Activated naive CD4-positive, alpha-beta T cell treated with anti-CD3 and anti-CD28 coated beads for 36 hours (primary cell): ENCODE measurements at regions of chr7 and their contacts with region 1.

Region 1: DNA sequence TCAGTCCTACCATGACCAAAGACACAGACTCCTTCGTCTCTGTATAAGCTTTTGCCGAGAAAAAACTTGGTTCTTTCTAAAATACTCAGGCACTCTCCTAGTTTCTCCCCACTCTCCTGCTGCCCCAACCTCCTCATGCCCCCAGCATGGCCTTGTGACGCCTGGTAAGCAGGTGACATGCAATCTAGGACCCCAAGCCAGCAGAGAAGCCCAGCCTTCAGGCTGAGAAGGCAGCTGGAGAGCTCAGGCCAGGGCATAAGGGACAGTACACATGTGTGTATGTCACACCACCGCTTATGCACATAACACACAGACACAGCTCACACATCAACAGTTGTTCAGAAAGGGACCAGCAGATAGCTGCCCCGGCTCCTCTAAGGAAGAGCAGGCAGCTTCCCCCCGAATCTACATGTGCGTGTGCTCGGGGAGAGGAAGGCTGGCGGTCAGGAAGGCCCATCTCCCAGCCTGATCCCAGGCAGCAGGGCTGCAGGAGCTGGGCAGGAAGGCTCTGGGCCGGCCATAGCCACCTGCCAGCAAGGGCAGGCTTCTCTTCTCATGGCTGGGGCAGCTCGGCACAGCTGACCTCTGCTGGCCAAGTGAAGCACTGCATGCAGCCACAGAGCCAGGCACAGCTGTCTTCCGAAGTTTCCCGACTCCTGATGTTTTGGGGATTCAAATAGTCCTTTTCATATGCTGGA is 8.5 kb downstream of the DDX56 start:
- DNase-seq: peak; percentile 71
- H3K4me3 Mint-ChIP-seq: no peak overlapping the region
- H3K27ac Mint-ChIP-seq: peak overlapping the region; percentile 9
- H3K4me1 Mint-ChIP-seq: peaks cover 11% of the 10 kb centered on the region
- H3K27me3 Mint-ChIP-seq: no peaks in the 10 kb centered on the region

Region 2: DNA sequence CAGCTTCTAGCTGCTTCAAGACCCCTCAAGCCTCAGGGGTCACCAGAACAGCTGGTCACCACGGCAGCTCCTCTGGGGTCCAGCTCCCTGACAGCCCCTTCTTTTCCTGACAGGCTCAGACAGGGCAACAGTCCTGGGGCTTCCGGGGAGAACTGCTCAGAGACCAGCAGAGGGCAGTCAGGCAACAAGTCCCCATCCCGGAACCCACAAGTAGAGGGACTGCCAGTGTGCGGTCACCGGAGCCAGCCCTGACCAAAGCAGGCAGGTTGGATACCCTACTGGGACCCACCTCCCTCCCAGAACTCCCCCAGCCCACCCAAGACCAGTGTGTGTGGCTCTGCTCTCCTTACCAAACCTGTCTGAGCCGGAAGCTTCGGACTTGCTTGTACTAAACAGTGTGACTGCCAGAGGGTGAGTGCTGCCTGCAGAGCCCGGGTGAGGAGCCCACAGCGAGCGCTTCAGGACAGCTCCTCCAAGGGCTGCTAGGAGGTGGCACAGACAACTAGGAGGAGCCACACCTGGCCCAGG is 324.2 kb before region 1 on chr7:
- CTCF ChIA-PET with region 1: interaction called, 24 read pairs
- intact Hi-C with region 1: loop called (anchors 1 kb)
- DNase-seq: peak; percentile 82
- H3K4me3 Mint-ChIP-seq: no peak overlapping the region
- H3K27ac Mint-ChIP-seq: peak overlapping the region; percentile 30
- H3K4me1 Mint-ChIP-seq: no peaks in the 10 kb centered on the region
- H3K27me3 Mint-ChIP-seq: no peaks in the 10 kb centered on the region

Region 3: GRCh38 chr7:44348300-44348699 is 216.9 kb before region 1 on chr7:
- CTCF ChIA-PET with region 1: interaction called, 12 read pairs
- intact Hi-C with region 1: loop called (anchors 2 kb)
- DNase-seq: peak; percentile 43
- H3K4me3 Mint-ChIP-seq: no peak overlapping the region
- H3K27ac Mint-ChIP-seq: no peak overlapping the region
- H3K4me1 Mint-ChIP-seq: no peaks in the 10 kb centered on the region
- H3K27me3 Mint-ChIP-seq: peaks cover 8% of the 10 kb centered on the region

Region 4: GRCh38 chr7:44375236-44375699 is 190.0 kb before region 1 on chr7:
- CTCF ChIA-PET with region 1: interaction called, 6 read pairs
- intact Hi-C with region 1: loop called (anchors 10 kb)
- DNase-seq: no peak
- H3K4me3 Mint-ChIP-seq: no peak overlapping the region
- H3K27ac Mint-ChIP-seq: no peak overlapping the region
- H3K4me1 Mint-ChIP-seq: peaks cover 2% of the 10 kb centered on the region
- H3K27me3 Mint-ChIP-seq: peaks cover 3% of the 10 kb centered on the region

Region 5: DNA sequence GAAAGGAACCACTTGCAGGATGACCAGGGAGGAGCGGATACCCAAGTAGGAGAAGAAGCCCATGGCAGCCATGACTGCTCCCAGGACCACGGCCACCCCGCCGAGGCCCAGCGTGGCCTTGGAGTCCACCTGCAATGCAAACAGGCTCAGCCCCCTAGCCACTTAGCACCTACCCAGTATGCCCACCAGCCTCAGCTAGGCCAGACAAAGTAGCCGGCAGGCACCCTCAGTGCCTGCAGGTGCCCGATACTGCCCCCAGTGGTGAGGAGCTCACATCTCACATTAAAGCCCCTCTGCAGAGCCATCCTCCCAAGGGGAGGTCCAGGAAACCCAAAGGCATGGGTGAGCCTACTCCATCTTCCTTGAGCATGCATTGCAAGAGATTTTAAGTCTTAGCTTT is 30.7 kb before region 1 on chr7:
- CTCF ChIA-PET with region 1: interaction called, 18 read pairs
- intact Hi-C with region 1: no loop called
- DNase-seq: peak; percentile 57
- H3K4me3 Mint-ChIP-seq: no peak overlapping the region
- H3K27ac Mint-ChIP-seq: no peak overlapping the region
- H3K4me1 Mint-ChIP-seq: no peaks in the 10 kb centered on the region
- H3K27me3 Mint-ChIP-seq: no peaks in the 10 kb centered on the region

Region 6: DNA sequence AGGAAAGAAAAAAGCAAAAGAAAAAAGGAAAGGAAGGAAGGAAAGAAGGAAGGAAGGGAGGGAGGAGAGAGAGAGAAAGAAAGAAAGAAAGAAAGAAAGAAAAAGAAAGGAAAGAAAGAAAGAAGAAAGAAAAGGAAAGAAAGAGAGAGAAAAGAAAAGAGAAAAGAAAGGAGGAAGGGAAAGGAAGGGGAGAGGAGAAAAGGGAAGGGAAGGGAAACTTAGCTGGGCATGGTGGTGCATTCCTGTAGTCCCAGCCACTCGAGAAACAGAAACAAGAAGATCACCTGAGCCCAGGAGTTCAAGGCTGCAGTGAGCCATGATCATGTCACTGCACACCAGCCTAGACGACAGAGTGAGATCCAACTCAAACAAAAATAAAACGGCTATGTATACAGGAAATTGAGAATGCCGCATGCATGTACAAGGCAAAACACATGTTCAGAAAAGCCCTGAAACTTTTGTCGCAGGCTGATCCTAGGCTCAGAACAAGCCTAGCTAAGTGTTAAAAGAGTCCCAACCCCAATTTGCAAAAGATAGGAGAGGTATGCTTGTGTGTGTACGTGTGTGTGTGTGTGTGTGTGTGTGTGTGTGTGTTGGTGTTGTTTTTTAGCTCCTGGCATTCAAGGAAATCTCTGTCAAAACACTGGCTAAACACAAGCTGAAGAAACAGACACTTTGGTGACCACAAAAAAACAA is 17.6 kb before region 1 on chr7:
- CTCF ChIA-PET with region 1: interaction called, 31 read pairs
- intact Hi-C with region 1: no loop called
- DNase-seq: no peak
- H3K4me3 Mint-ChIP-seq: no peak overlapping the region
- H3K27ac Mint-ChIP-seq: no peak overlapping the region
- H3K4me1 Mint-ChIP-seq: peaks cover 4% of the 10 kb centered on the region
- H3K27me3 Mint-ChIP-seq: no peaks in the 10 kb centered on the region

Region 7: DNA sequence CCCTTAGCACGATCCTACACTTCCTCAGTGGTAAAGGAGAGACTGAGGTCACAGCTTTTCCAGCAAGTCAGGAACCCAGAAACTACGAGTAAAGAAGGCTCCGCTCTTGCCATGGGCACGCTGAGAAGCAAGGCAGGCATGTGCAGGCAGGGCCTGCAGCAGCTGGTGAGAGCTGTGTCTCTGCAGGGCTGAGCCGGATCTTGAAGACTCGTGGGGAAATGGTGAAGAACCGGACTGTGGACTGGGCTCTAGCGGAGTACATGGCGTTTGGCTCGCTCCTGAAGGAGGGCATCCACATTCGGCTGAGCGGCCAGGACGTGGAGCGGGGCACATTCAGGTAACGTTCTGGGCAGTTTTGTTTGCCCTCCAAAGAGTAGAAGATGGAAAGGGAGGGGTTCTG is 131.5 kb after region 1 on chr7:
- CTCF ChIA-PET with region 1: no interaction called
- intact Hi-C with region 1: no loop called
- DNase-seq: no peak
- H3K4me3 Mint-ChIP-seq: no peak overlapping the region
- H3K27ac Mint-ChIP-seq: no peak overlapping the region
- H3K4me1 Mint-ChIP-seq: no peaks in the 10 kb centered on the region
- H3K27me3 Mint-ChIP-seq: no peaks in the 10 kb centered on the region